Adrenal gland (tissue), 19 donors: ENCODE measurements at regions of chr1 and their contacts with region 1.

Region 1: DNA sequence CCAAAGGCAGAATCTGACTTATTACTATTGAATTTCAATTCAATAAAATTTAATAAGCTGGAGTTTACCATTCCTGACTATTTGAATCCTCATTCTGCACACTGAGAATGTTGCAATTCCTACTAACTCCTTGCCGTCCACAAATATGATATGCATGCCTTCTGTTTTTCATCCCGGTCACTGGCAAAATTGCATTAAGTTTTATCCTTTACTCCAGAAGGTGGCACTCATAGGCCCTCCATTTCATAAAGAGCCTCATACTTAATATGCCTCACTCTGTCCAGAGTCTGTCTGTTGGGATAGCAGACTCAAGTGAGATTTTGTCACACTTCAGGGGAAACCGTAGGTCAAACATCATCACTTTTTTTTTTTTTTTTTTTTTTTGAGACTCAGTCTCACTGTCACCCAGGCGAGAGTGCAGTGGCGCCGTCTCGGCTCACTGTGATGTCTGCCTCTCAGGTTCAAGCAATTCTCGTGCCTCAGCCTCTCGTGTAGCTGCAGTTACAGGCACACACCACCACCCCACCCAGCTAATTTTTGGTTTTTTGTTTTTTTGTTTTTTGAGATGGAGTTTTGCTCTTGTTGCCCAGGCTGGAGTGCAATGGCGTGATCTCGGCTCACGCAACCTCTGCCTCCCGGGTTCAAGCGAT is 27.3 kb downstream of the F11R start:
- DNase-seq: peak in 3 of 7 donors; percentile 27 to 38 (median 37)
- H3K4me3 ChIP-seq: no peak overlapping the region
- H3K27ac ChIP-seq: no peak overlapping the region
- H3K4me1 ChIP-seq: peaks cover 0 to 7% of the 10 kb centered on the region in 2 donors
- H3K27me3 ChIP-seq: no peaks in the 10 kb centered on the region
- CTCF ChIP-seq: peak in 5 of 6 experiments; percentile 35 to 61 (median 48)
- POLR2A ChIP-seq: no peak

Region 2: DNA sequence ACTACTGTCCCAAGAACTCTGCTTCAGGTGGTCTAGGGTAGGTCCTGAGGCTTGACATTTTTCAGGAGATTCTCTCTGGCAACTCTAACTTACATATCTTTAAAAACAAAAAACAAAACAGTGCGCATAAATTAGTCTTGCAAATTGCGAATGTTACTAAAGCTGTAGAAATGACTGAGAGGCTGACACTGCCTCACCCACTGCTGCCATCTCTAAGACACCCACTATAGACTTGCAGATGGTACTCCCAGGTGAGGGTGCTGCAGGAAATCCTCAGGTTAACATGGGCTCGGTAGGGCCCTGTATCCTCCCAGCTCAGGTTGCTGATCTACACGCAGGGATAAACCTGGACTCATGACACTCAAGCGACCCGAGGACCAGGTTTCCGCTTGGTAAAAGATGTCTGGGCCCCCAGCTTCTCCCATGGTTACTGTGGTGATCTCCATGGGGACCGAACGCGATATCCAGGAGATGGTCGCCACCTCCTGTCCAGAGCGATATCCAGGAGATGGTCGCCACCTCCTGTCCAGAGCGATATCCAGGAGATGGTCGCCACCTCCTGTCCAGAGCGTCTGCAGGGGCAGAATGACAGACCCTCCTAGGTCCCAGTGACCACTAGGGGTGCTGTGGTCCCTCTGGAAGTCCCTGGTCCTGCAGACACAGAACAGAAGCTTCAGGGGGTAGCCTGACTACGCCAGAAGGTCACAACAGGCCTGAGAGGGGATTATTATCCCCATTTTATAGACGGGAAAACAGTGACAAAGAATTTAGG is 213.9 kb before region 1 on chr1:
- intact Hi-C with region 1: no loop called
- DNase-seq: no peak
- H3K4me3 ChIP-seq: no peak overlapping the region
- H3K27ac ChIP-seq: no peak overlapping the region
- H3K4me1 ChIP-seq: no peaks in the 10 kb centered on the region
- H3K27me3 ChIP-seq: no peaks in the 10 kb centered on the region
- CTCF ChIP-seq: peak in 1 of 6 experiments; percentile 15
- POLR2A ChIP-seq: no peak

Region 3: DNA sequence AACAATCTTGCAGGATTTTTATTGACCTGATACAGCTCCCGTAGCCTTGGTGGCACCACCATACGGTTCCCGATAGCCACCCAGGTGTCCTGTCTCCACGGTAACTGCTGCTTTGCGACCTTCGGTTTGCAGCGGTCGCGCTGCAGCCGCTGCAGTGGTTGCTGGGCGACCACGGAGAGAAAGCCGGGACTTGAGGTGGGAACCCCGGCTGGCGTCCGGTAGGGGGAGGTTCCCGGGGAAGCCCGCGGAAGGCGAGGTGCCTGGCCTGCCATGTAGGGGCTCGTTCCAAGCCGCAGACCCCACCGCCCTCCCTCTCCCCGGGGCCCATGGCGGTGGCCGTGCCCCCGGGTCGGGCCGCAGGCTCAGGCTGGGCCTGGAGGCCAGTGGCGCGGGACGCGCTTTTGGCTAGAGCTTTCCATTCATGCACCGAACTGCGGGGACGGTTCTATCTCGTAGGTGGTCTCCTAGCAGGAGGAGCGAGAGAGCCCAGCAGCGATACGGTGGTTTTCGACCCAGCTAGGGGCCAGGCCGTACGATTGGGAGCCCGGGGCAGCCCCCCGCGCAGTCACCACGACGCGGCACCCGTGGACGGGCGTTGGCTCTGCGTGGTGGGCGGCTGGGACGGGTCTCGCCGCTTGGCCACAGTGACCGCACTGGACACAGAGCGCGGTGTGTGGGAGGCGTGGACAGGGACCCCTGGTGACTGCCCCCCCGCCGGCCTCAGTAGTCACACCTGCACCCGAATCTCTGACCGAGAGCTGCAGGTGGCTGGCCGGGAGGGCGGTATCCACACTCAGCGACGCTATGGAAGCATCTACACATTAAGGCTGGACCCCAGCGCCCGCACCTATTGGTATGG is 104.8 kb after region 1 on chr1 and contains the start of gene KLHDC9:
- intact Hi-C with region 1: loop called (anchors 5 kb)
- DNase-seq: peak; percentile 77 to 95 (median 90)
- H3K4me3 ChIP-seq: peak within 1 kb of the TSS in 3 of 4 donors; percentile 7 to 77 (median 50)
- H3K27ac ChIP-seq: peak within 1 kb of the TSS in 2 of 5 donors; percentile 76 to 80
- H3K4me1 ChIP-seq: peaks cover 6 to 7% of the 10 kb centered on the region in 2 donors
- H3K27me3 ChIP-seq: no peaks in the 10 kb centered on the region
- CTCF ChIP-seq: peak in 2 of 6 experiments; percentile 21 to 34
- POLR2A ChIP-seq: no peak
- total RNA-seq, gene KLHDC9: 5.2 to 28.1 (median 19.4) TPM